ENCODE measurements at regions of chr14 and their contacts with region 1.

Region 1: GRCh38 chr14:76647697-76648298 is 113.5 kb upstream of the VASH1 start:
- DNase-seq: peak; percentile 44
- H3K4me3 ChIP-seq: no peak overlapping the region
- H3K27ac ChIP-seq: no peak overlapping the region
- H3K4me1 ChIP-seq: no peaks in the 10 kb centered on the region
- H3K27me3 ChIP-seq: no peaks in the 10 kb centered on the region
- CTCF ChIP-seq: peak; percentile 88 to 90

Region 2: DNA sequence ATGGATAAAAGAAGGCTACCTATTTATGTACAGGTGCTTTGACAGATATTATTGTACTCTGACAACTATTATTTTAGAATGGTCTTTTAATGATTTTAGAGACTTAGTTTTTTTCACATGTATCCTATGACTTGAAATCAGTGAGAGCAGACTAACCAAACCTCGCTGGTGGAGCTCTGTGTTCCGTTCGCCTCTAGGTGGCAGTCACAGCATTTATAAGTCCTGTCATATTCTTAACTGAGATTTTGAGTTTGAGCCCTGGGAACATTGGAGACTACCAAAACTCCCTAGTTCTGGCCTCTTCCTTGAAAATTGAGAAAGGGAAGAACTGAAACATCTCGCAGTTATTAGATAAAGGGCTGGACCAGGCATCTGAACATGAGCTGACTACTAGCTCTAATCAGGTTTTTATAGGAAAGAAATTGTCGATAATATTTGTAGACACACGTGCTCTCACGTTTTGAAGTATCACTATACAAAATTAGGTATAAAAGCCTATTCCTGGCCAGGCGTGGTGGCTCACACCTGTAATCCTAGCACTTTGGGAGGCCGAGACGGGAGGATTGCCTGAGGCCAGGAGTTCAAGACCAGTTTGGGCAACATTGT is 938.5 kb before region 1 on chr14:
- CTCF ChIA-PET with region 1: no interaction called
- dilution Hi-C with region 1: no loop called
- in situ Hi-C with region 1: no loop called
- intact Hi-C with region 1: loop called (anchors 2 kb)
- DNase-seq: peak; percentile 49
- H3K4me3 ChIP-seq: no peak overlapping the region
- H3K27ac ChIP-seq: no peak overlapping the region
- H3K4me1 ChIP-seq: peaks cover 19% of the 10 kb centered on the region
- H3K27me3 ChIP-seq: no peaks in the 10 kb centered on the region
- CTCF ChIP-seq: peak; percentile 73 to 87

Region 3: DNA sequence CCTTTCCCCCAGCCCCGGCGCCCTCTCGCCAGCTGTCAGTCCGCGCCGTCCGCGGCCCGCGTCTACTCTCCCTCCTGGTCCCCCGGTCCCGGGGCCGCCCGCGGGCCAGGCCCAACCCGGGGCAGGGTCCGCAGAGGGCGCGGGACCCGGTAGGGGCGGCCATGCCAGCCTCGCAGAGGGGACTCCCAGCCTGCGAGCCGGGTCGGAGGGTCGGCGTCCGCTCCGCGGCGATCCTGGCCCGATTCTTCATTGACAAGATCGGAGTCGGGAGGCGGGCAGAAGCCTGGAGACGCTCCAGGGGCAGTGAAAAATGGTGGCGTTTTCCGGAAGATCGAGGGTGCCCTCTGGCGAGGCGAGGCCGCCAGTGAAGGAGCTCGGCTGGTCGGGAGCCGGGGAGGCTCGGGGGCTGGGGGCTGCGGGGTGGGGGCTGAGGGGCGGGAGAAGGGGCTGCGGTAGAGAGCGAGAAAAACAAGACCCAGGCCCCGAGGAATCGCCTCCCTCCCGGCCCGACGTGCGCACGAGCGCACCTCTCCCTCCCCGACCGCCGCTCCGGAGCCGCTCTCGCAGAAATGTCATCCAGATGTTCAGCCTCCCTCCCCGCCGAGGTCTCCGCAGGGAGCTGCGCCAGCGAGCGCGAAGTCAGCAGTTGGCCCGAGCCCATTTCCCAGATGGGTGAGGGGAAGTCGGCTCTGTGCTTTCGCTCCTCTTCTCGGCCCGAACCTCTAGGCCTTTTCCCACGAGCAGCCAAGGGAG is 665.4 kb before region 1 on chr14:
- CTCF ChIA-PET with region 1: no interaction called
- dilution Hi-C with region 1: no loop called
- in situ Hi-C with region 1: no loop called
- intact Hi-C with region 1: loop called (anchors 10 kb)
- DNase-seq: peak; percentile 72
- H3K4me3 ChIP-seq: peak overlapping the region; percentile 57 to 62 (median 61)
- H3K27ac ChIP-seq: peak overlapping the region; percentile 59
- H3K4me1 ChIP-seq: peaks cover 34% of the 10 kb centered on the region
- H3K27me3 ChIP-seq: no peaks in the 10 kb centered on the region
- CTCF ChIP-seq: peak; percentile 28 to 71

Region 4: DNA sequence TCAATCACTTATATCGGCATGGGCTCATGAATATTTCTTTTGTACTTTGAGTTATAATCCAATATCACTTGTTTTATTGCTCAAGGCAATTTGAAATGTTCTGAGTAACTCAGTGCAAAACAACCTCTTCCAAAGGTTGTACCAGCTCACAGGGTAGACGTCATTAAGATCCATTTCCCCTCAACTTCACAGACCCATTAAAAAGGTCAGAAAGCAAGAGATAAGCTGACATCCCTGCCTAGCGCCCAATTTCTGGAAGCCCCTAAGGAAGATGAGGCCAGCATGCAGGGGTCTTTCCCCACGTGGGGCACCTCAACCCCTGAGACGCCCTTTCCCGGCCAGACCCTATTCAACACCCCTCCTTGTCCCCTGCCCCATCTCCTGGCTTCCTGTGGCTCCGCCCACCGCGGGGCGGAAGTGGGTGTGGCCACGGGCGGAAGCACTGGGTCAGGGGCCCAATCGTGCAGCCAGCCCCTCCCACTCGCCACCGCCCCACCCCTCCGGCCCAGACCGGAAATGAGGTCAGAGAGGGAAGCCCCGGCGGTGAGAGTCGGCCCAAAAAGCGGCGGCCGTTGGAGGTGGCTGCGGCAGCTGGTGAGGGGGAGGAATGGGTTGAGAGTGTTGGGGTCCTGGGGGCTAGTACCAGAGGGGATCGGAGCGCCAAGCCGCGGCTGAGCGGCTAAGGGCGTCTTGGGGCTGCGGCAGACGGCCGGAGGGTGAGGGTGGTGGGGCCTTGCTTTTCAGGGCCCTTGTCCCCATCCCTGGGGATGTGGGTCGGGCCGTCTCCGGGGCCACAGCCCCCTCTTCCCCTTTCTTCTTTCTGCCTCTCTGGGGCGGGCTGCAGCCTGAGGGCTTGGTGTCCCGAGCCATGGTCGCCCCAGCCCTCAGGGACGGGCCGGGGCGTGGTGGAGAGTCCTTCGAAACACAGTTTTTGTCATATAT is 496.1 kb before region 1 on chr14 and contains the start of gene GPATCH2L:
- CTCF ChIA-PET with region 1: no interaction called
- dilution Hi-C with region 1: no loop called
- in situ Hi-C with region 1: no loop called
- intact Hi-C with region 1: loop called (anchors 5 kb)
- DNase-seq: peak; percentile 88
- H3K4me3 ChIP-seq: peak within 1 kb of the TSS; percentile 80 to 84 (median 82)
- H3K27ac ChIP-seq: peak within 1 kb of the TSS; percentile 86
- H3K4me1 ChIP-seq: peaks cover 28% of the 10 kb centered on the region
- H3K27me3 ChIP-seq: no peaks in the 10 kb centered on the region
- CTCF ChIP-seq: no peak
- total RNA-seq, gene GPATCH2L: 65.1 to 69.5 TPM

Region 5: GRCh38 chr14:76352639-76353281 is 295.0 kb before region 1 on chr14:
- CTCF ChIA-PET with region 1: no interaction called
- dilution Hi-C with region 1: no loop called
- in situ Hi-C with region 1: no loop called
- intact Hi-C with region 1: loop called (anchors 2 kb)
- DNase-seq: peak; percentile 21
- H3K4me3 ChIP-seq: peak overlapping the region in 2 of 3 experiments; percentile 13 to 38
- H3K27ac ChIP-seq: no peak overlapping the region
- H3K4me1 ChIP-seq: peaks cover 16% of the 10 kb centered on the region
- H3K27me3 ChIP-seq: peaks cover 3% of the 10 kb centered on the region
- CTCF ChIP-seq: peak; percentile 51 to 87

Region 6: GRCh38 chr14:76456200-76456599 is 191.6 kb before region 1 on chr14:
- CTCF ChIA-PET with region 1: no interaction called
- dilution Hi-C with region 1: no loop called
- in situ Hi-C with region 1: loop called in 1 of 2 experiments (anchors 25 kb)
- intact Hi-C with region 1: loop called (anchors 1 kb)
- DNase-seq: peak; percentile 24
- H3K4me3 ChIP-seq: no peak overlapping the region
- H3K27ac ChIP-seq: no peak overlapping the region
- H3K4me1 ChIP-seq: no peaks in the 10 kb centered on the region
- H3K27me3 ChIP-seq: no peaks in the 10 kb centered on the region
- CTCF ChIP-seq: peak; percentile 55 to 61

Measured in mammary epithelial cell (primary cell).